Heart left ventricle (tissue), 16 donors: ENCODE measurements at regions of chr10 and their contacts with region 1.

Region 1: DNA sequence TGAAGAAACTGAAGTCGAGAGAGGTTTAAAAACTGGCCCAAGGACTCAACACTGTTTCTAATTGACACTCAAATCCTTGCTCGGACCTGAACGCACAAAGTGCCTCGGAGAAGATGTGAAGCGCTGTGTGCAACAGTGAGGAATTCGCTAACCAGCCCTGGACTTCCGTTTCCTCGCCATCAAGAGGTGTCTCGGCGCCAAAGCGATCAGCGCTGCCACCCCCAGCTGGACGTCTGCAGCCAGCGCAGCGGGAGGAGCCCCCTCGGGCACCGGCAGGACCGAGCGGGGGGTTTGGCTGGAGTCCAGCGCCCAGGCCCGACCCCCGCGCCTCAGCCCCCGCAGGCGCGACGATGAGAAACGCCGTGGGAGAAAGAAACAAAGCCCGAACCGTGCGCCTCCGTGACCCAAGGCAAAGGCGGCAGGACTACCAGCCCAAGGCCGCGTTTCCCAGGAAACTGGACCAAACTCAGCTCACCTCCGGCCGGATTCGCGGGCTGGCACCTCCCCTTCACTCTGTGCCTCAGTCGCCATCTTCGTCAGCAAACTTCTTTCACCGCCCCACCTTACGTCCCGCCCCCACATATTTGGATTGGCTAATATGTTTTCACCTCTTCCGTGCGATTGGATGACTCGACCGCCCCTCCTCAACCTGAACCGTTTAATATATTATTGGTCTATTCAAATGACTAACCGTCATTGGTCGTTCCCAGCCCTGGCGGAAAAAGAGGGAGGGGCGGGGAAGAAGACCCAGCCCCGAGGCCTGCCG is at the start of gene ARHGAP19:
- DNase-seq: peak; percentile 94 to 98 (median 97)
- ATAC-seq: peak; percentile 99 to 100 (median 99)
- H3K4me3 ChIP-seq: peak within 1 kb of the TSS; percentile 70 to 100 (median 90)
- H3K27ac ChIP-seq: peak within 1 kb of the TSS; percentile 75 to 98 (median 95)
- H3K4me1 ChIP-seq: peaks cover 0 to 12% (median 8%) of the 10 kb centered on the region in 12 donors
- H3K27me3 ChIP-seq: no peaks in the 10 kb centered on the region
- CTCF ChIP-seq: peak in 3 of 12 donors; percentile 6 to 30 (median 19)
- POLR2A ChIP-seq: peak in 1 of 2 donors; percentile 75
- total RNA-seq, gene ARHGAP19: 3.0 to 7.4 (median 4.1) TPM

Region 2: DNA sequence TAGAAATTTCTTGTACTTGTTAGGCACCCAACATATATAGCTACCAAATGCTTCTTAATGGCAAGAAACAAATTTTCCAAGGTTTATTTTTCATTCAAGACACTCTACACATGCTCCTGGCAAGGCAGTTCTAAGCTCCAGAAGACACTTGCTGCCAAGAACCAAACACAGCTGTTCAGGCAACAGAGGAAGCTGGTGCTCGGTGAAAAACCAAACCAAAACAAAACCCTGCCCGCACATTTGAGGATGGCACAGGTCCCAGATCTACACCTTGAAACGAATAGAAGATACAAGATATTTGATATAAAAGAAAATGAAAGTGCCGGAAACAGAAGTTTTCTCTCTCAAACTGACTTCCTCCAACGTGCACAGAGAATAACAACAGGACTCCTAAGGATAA is 992.9 kb before region 1 on chr10:
- intact Hi-C with region 1: no loop called
- DNase-seq: no peak
- ATAC-seq: no peak
- H3K4me3 ChIP-seq: peak overlapping the region in 2 of 12 donors; percentile 3 to 10
- H3K27ac ChIP-seq: no peak overlapping the region
- H3K4me1 ChIP-seq: peaks cover 0 to 12% (median 0%) of the 10 kb centered on the region in 12 donors
- H3K27me3 ChIP-seq: peaks cover 0 to 19% (median 0%) of the 10 kb centered on the region in 9 donors
- CTCF ChIP-seq: no peak
- POLR2A ChIP-seq: no peak

Region 3: GRCh38 chr10:97327348-97328294 is 35.3 kb after region 1 on chr10:
- intact Hi-C with region 1: loop called in 5 of 10 experiments (anchors 5 kb)
- DNase-seq: no peak
- ATAC-seq: no peak
- H3K4me3 ChIP-seq: no peak overlapping the region
- H3K27ac ChIP-seq: no peak overlapping the region
- H3K4me1 ChIP-seq: peaks cover 2 to 65% (median 26%) of the 10 kb centered on the region in 12 donors
- H3K27me3 ChIP-seq: no peaks in the 10 kb centered on the region
- CTCF ChIP-seq: no peak
- POLR2A ChIP-seq: no peak

Region 4: GRCh38 chr10:97490592-97490991 is 198.3 kb after region 1 on chr10:
- intact Hi-C with region 1: no loop called
- DNase-seq: peak in 4 of 5 donors; percentile 36 to 69 (median 60)
- ATAC-seq: peak; percentile 87 to 94 (median 90)
- H3K4me3 ChIP-seq: no peak overlapping the region
- H3K27ac ChIP-seq: peak overlapping the region; percentile 41 to 85 (median 70)
- H3K4me1 ChIP-seq: peaks cover 5 to 77% (median 50%) of the 10 kb centered on the region in 12 donors
- H3K27me3 ChIP-seq: no peaks in the 10 kb centered on the region
- CTCF ChIP-seq: no peak
- POLR2A ChIP-seq: peak in 1 of 2 donors; percentile 39